ENCODE measurements at regions of chr4 and their contacts with region 1.

Region 1: GRCh38 chr4:153573881-153574802 is 108.0 kb downstream of the TMEM131L start:
- DNase-seq: peak; percentile 65
- ATAC-seq: peak; percentile 83
- H3K4me3 ChIP-seq: peak overlapping the region in 1 of 5 experiments; percentile 32
- H3K4me3 Mint-ChIP-seq: peak overlapping the region; percentile 69
- H3K27ac ChIP-seq: peak overlapping the region; percentile 25 to 65
- H3K27ac Mint-ChIP-seq: peak overlapping the region; percentile 80
- H3K4me1 ChIP-seq: peaks cover 56 to 58% of the 10 kb centered on the region in 2 donors
- H3K4me1 Mint-ChIP-seq: peaks cover 71% of the 10 kb centered on the region
- H3K27me3 ChIP-seq: no peaks in the 10 kb centered on the region
- H3K27me3 Mint-ChIP-seq: no peaks in the 10 kb centered on the region
- CTCF ChIP-seq: peak; percentile 65

Region 2: GRCh38 chr4:152817331-152817730 is 756.8 kb before region 1 on chr4:
- CTCF ChIA-PET with region 1: no interaction called
- POLR2A ChIA-PET with region 1: no interaction called
- intact Hi-C with region 1: no loop called
- DNase-seq: no peak
- ATAC-seq: no peak
- H3K4me3 ChIP-seq: no peak overlapping the region
- H3K4me3 Mint-ChIP-seq: no peak overlapping the region
- H3K27ac ChIP-seq: no peak overlapping the region
- H3K27ac Mint-ChIP-seq: no peak overlapping the region
- H3K4me1 ChIP-seq: peaks cover 0 to 10% of the 10 kb centered on the region in 2 donors
- H3K4me1 Mint-ChIP-seq: peaks cover 24% of the 10 kb centered on the region
- H3K27me3 ChIP-seq: no peaks in the 10 kb centered on the region
- H3K27me3 Mint-ChIP-seq: no peaks in the 10 kb centered on the region
- CTCF ChIP-seq: no peak

Region 3: DNA sequence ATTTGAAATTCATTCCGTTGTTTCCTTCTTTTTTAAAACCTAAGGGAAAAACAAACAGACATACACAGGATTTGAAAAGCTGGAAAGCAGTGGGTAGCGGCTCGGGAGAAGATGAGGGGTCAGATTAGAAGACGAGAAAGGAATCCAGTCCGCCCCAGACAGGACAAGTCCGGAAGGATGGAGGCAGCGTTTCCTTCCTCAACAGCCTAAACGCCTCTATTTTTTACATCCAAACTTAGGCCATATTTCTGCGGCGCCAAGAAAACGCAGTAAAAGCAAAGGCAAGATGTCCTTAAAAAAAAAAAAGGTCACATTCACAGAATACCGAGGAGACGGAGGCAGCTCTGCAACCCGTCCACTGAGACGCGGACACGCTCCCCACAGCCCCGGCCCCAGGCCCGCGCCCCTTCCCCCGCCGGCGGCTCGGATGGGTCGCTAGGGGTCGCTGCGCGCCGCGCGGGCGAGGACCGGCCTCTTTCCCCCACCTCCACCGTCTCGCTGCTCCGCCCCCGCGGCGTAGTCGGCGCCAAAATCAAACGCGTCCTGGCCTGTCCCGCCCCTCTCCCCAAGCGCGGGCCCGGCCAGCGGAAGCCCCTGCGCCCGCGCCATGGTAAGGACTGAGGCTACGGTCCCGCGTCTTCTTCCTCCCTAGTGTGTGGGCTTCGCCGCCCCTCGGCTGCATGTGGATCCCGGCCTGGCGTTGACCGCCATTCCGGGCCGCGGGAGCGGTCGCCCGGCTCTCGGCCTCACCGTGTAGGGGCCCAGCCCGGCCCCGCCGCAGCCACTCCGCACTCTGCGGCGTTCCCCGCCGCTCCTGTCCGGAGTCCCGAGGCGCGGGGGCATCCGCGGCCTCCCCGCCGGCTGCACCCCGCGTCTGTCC is 229.8 kb before region 1 on chr4 and contains the start of gene MND1:
- CTCF ChIA-PET with region 1: interaction called, 83 read pairs
- POLR2A ChIA-PET with region 1: no interaction called
- intact Hi-C with region 1: loop called (anchors 1 kb)
- DNase-seq: peak; percentile 90
- ATAC-seq: peak; percentile 92
- H3K4me3 ChIP-seq: peak within 1 kb of the TSS; percentile 62 to 90 (median 74)
- H3K4me3 Mint-ChIP-seq: peak within 1 kb of the TSS; percentile 95
- H3K27ac ChIP-seq: no peak within 1 kb of the TSS
- H3K27ac Mint-ChIP-seq: peak within 1 kb of the TSS; percentile 33
- H3K4me1 ChIP-seq: peaks cover 25% of the 10 kb centered on the region in 2 donors
- H3K4me1 Mint-ChIP-seq: peaks cover 42% of the 10 kb centered on the region
- H3K27me3 ChIP-seq: no peaks in the 10 kb centered on the region
- H3K27me3 Mint-ChIP-seq: no peaks in the 10 kb centered on the region
- CTCF ChIP-seq: peak; percentile 98
- total RNA-seq, gene MND1: not detected in 2 replicates

Region 4: GRCh38 chr4:153426207-153426885 is 147.8 kb before region 1 on chr4:
- CTCF ChIA-PET with region 1: interaction called, 57 read pairs
- POLR2A ChIA-PET with region 1: no interaction called
- intact Hi-C with region 1: no loop called
- DNase-seq: peak; percentile 69
- ATAC-seq: peak; percentile 67
- H3K4me3 ChIP-seq: peak overlapping the region in 2 of 5 experiments; percentile 15 to 23
- H3K4me3 Mint-ChIP-seq: peak overlapping the region; percentile 70
- H3K27ac ChIP-seq: peak overlapping the region; percentile 86 to 90
- H3K27ac Mint-ChIP-seq: peak overlapping the region; percentile 92
- H3K4me1 ChIP-seq: peaks cover 35 to 47% of the 10 kb centered on the region in 2 donors
- H3K4me1 Mint-ChIP-seq: peaks cover 47% of the 10 kb centered on the region
- H3K27me3 ChIP-seq: no peaks in the 10 kb centered on the region
- H3K27me3 Mint-ChIP-seq: no peaks in the 10 kb centered on the region
- CTCF ChIP-seq: no peak

Region 5: DNA sequence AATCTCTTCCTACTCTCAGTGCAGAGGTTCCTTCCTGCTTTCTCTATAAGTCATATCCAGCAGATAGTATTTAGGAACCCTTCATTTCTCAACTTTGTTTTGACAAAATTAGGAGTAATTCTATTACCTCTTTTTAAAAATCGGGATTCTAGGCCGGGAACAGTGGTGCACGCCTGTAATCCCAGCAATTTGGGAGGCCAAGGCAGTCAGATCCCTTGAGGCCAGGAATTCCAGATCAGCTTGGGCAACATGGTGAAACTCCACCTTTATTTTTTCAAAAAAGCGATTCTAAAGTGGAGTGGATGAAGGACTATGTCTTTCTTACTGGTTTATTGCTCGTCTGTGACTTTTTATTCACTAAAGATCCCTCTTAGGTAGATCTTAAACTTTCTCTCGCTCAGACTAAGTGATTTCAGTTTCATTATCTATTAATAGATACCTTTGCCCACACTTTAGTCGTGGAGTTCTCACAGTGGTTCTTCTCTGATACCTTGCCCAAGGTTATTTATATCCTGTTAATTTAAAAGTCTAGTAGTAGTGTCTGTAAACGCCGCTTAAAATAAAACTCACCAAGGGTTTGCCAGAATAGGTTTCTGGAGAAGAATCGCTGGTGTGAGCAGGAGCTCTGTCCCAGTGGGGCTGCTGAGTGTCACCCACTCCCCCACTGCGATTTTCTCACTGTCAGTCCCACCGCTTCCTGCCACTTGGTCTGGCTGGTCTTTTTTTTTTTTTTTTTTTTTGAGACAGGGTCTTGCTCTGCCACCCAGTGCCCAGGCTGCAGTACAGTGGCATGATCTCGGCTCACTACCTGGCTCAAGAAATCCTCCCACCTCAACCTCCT is 135.0 kb before region 1 on chr4:
- CTCF ChIA-PET with region 1: interaction called, 57 read pairs
- POLR2A ChIA-PET with region 1: interaction called, 8 read pairs
- intact Hi-C with region 1: no loop called
- DNase-seq: peak; percentile 79
- ATAC-seq: peak; percentile 68
- H3K4me3 ChIP-seq: peak overlapping the region; percentile 44 to 81 (median 59)
- H3K4me3 Mint-ChIP-seq: peak overlapping the region; percentile 75
- H3K27ac ChIP-seq: peak overlapping the region; percentile 93 to 97
- H3K27ac Mint-ChIP-seq: peak overlapping the region; percentile 74
- H3K4me1 ChIP-seq: peaks cover 50 to 60% of the 10 kb centered on the region in 2 donors
- H3K4me1 Mint-ChIP-seq: peaks cover 59% of the 10 kb centered on the region
- H3K27me3 ChIP-seq: no peaks in the 10 kb centered on the region
- H3K27me3 Mint-ChIP-seq: no peaks in the 10 kb centered on the region
- CTCF ChIP-seq: no peak

Region 6: DNA sequence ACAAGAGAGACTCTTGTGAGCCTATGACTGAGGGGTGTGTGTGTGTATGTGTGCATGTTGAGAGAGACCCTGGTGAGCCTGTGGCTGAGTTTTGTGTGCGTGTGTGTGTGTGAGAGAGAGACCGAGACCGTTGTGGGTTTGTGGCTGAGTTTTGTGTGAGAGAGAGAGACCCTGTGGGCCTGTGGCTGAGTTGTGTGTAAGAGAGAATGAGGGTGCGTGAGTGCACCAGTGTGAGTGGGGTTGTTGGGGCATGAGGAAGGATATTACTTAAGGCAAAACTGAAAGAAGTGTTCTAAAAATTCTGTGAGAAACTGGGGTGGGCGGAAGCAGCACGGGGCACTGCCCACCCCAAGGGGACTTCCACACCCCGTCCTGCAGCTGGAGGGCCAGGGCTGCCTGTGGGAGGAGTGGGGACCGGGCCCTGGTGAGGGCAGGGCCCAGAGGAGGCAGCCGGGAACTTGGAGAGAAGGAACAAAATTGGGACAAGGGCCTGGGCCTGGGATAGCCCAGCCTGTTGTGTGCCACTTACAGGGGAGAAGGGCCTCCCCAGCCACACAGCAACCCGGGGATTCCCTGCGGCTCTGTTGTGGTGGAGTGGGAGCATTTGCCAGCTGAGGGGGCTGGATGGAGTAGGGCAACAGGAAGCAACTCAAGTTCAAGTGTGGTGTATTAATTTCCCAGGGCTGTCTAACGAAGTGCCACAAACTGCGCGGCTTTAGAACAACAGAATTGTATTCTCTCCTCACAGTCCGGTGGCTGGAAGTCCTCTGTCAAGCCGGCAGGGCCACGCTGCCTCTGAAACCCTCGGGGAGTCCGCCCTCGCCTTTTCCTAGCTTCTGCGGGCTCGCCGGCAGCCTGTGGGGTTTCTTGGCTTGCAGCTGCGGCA is 85.9 kb before region 1 on chr4:
- CTCF ChIA-PET with region 1: interaction called, 19 read pairs
- POLR2A ChIA-PET with region 1: interaction called, 3 read pairs
- intact Hi-C with region 1: loop called (anchors 5 kb)
- DNase-seq: peak; percentile 86
- ATAC-seq: peak; percentile 72
- H3K4me3 ChIP-seq: peak overlapping the region; percentile 40 to 65 (median 51)
- H3K4me3 Mint-ChIP-seq: peak overlapping the region; percentile 87
- H3K27ac ChIP-seq: peak overlapping the region; percentile 96 to 98
- H3K27ac Mint-ChIP-seq: peak overlapping the region; percentile 97
- H3K4me1 ChIP-seq: peaks cover 85 to 90% of the 10 kb centered on the region in 2 donors
- H3K4me1 Mint-ChIP-seq: peaks cover 85% of the 10 kb centered on the region
- H3K27me3 ChIP-seq: no peaks in the 10 kb centered on the region
- H3K27me3 Mint-ChIP-seq: no peaks in the 10 kb centered on the region
- CTCF ChIP-seq: no peak

Region 7: DNA sequence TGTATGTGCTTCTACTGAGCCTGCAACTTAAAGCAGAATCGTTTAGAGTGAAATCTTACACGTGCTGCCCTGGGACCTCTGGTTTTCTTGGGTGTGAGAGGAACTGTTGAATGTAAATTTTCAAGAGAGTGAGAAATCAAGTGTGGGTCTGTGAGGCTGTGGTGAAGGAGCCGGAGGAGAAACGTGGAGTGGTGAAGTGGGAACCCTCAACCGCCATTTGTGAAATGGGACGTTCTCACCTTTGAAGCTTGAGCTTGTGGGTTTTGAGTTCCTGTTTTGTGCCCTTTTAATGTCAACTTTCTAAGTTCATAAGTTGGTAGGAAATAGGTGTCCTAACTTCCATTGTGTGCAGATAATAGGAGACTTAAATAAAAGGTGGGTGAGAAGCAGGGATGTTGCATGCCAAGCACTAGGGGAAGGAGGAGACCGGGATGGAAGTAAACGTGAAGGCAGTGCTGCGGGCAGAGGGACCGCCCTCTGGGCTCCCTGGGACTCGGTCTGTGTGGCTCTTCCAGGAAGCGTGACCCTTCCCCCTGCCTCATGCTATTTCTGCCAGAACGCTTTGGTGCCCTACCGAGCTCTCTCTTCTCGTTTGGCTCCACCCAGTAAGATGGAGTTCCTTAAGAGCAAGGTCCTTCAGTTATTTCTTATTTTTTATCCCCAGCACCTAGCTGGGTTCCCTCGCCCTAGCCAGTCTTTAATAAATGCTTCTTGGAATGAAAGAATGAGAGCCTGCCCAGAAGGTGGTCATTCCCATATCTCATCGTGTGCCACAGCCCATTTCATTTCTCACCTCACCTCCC is 51.9 kb before region 1 on chr4:
- CTCF ChIA-PET with region 1: interaction called, 13 read pairs
- POLR2A ChIA-PET with region 1: no interaction called
- intact Hi-C with region 1: loop called (anchors 2 kb)
- DNase-seq: peak; percentile 66
- ATAC-seq: peak; percentile 29
- H3K4me3 ChIP-seq: peak overlapping the region in 3 of 5 experiments; percentile 14 to 51 (median 17)
- H3K4me3 Mint-ChIP-seq: peak overlapping the region; percentile 82
- H3K27ac ChIP-seq: peak overlapping the region; percentile 61 to 87
- H3K27ac Mint-ChIP-seq: peak overlapping the region; percentile 88
- H3K4me1 ChIP-seq: peaks cover 91 to 96% of the 10 kb centered on the region in 2 donors
- H3K4me1 Mint-ChIP-seq: peaks cover 96% of the 10 kb centered on the region
- H3K27me3 ChIP-seq: no peaks in the 10 kb centered on the region
- H3K27me3 Mint-ChIP-seq: no peaks in the 10 kb centered on the region
- CTCF ChIP-seq: no peak

Region 8: DNA sequence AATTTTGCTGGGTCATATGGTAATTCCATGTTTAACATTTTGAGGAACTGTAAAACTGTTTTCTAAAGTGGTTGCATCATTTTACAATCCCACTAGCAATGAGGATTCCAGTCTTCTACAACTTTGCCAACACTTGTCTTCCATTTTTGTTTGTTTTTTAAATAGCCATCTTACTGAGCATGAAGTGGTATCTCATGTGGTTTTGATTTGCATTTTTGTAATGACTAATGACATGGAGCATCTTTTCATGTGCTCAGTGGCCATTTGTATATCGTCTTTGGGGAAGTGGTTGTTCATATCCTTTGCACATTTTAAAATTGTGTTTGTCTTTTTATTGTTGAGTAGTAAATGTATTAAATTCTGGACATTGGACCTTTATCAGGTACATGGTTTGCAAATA is 13.2 kb before region 1 on chr4:
- CTCF ChIA-PET with region 1: interaction called, 8 read pairs
- POLR2A ChIA-PET with region 1: interaction called, 4 read pairs
- intact Hi-C with region 1: loop called (anchors 2 kb)
- DNase-seq: peak; percentile 23
- ATAC-seq: peak; percentile 54
- H3K4me3 ChIP-seq: no peak overlapping the region
- H3K4me3 Mint-ChIP-seq: no peak overlapping the region
- H3K27ac ChIP-seq: peak overlapping the region in 1 of 2 donors; percentile 27
- H3K27ac Mint-ChIP-seq: peak overlapping the region; percentile 64
- H3K4me1 ChIP-seq: peaks cover 2 to 4% of the 10 kb centered on the region in 2 donors
- H3K4me1 Mint-ChIP-seq: peaks cover 27% of the 10 kb centered on the region
- H3K27me3 ChIP-seq: no peaks in the 10 kb centered on the region
- H3K27me3 Mint-ChIP-seq: no peaks in the 10 kb centered on the region
- CTCF ChIP-seq: no peak